K562 (cell line): ENCODE measurements at regions of chr1 and their contacts with region 1.

Region 1: DNA sequence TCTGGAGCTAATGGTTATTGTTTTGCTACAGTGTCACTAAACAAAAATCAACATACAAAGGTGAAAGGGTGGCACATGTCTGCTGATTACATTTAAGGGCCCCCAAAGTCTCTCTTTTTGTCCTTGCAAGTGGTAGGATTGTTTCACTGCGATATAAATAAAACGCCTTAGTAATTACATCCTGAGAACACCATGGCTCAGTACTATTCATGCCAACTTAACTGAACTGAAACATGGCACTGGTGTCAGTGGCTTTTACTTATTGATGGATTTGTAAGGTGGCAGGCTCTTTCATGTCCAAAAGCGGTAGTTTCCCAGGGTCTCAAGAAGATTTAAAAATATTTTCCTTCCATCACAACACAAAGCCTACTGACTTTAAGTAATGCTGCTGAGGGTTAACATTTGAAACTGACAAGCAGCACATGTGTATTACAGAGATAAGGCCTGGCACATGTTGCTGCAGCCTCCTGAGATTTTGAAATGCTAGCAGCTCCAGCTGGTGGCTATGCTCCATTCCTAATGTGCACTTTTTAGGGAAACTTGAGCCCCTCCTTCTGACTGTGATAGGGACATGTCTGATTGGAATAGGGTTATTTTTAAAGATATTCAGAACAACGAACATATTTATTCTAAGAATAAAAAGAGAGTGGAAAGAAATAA is 86.8 kb downstream of the ATP1B1 start:
- DNase-seq: peak; percentile 12 to 81 (median 42)
- ATAC-seq: peak; percentile 87
- H3K4me3 ChIP-seq: no peak overlapping the region
- H3K27ac ChIP-seq: no peak overlapping the region
- H3K4me1 ChIP-seq: peaks cover 0 to 3% of the 10 kb centered on the region in 2 experiments; a peak in 2 of 5 replicates
- H3K27me3 ChIP-seq: no peaks in the 10 kb centered on the region
- CTCF ChIP-seq: peak; percentile 27 to 71 (median 63); a peak in 4 of 6 replicates
- EP300 ChIP-seq: peak; percentile 77
- POLR2A ChIP-seq: no peak
- RAD21 ChIP-seq: peak; percentile 71 to 73

Region 2: DNA sequence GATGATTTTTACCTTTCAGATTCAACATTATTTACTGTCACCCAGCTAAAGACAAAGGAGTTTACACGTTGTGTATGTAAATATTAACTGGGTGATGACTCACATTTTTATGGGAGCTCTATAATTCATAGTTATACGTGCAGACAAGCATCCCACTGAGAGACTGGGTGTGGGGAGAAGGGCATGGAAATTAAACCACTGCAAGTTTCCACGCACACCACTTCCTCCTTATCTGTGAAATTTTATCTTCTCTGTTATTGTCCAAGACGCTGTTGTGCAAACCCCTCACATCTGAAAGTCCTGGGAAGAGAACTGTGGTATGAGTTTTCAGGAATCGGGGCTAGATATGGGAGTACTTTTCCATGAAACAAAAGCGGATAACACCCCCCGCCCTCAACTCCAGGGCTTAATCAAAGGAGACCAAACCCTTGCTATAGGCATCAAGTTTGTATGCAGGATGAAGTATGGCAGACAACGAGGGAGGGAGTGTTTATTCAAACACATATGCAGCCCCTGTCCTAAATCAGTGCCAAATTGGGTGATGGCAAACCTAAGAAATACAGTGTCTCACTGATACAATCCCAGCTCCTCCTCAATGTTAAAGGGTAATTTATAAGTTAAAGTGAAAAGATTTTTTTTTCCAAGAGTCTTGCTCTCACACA is 441.0 kb before region 1 on chr1:
- CTCF ChIA-PET with region 1: no interaction called
- POLR2A ChIA-PET with region 1: no interaction called
- in situ Hi-C with region 1: no loop called
- intact Hi-C with region 1: loop called (anchors 10 kb)
- DNase-seq: no peak
- ATAC-seq: no peak
- H3K4me3 ChIP-seq: no peak overlapping the region
- H3K27ac ChIP-seq: no peak overlapping the region
- H3K4me1 ChIP-seq: no peaks in the 10 kb centered on the region
- H3K27me3 ChIP-seq: peaks cover 5 to 18% of the 10 kb centered on the region in 2 experiments; a peak in 3 of 5 replicates
- CTCF ChIP-seq: no peak
- EP300 ChIP-seq: no peak
- POLR2A ChIP-seq: no peak
- RAD21 ChIP-seq: no peak